CD4-positive, alpha-beta memory T cell (primary cell): ENCODE measurements at regions of chr3 and their contacts with region 1.

Region 1: GRCh38 chr3:136861890-136862616 is at the start of gene NCK1:
- DNase-seq: peak; percentile 97 to 100 (median 98)
- H3K4me3 ChIP-seq: peak within 1 kb of the TSS; percentile 74 to 89
- H3K4me3 Mint-ChIP-seq: peak within 1 kb of the TSS; percentile 80 to 99 (median 96)
- H3K27ac ChIP-seq: peak within 1 kb of the TSS; percentile 91
- H3K27ac Mint-ChIP-seq: peak within 1 kb of the TSS; percentile 98 to 99 (median 98)
- H3K4me1 ChIP-seq: peaks cover 47% of the 10 kb centered on the region
- H3K4me1 Mint-ChIP-seq: peaks cover 38 to 74% (median 54%) of the 10 kb centered on the region in 4 donors
- H3K27me3 ChIP-seq: no peaks in the 10 kb centered on the region
- H3K27me3 Mint-ChIP-seq: no peaks in the 10 kb centered on the region
- total RNA-seq, gene NCK1: 61.2 to 68.4 TPM

Region 2: GRCh38 chr3:135532032-135532431 is 1330.0 kb before region 1 on chr3:
- CTCF ChIA-PET with region 1: no interaction called
- POLR2A ChIA-PET with region 1: no interaction called
- intact Hi-C with region 1: no loop called
- DNase-seq: no peak
- H3K4me3 ChIP-seq: no peak overlapping the region
- H3K4me3 Mint-ChIP-seq: no peak overlapping the region
- H3K27ac ChIP-seq: no peak overlapping the region
- H3K27ac Mint-ChIP-seq: no peak overlapping the region
- H3K4me1 ChIP-seq: no peaks in the 10 kb centered on the region
- H3K4me1 Mint-ChIP-seq: no peaks in the 10 kb centered on the region
- H3K27me3 ChIP-seq: no peaks in the 10 kb centered on the region
- H3K27me3 Mint-ChIP-seq: no peaks in the 10 kb centered on the region

Region 3: DNA sequence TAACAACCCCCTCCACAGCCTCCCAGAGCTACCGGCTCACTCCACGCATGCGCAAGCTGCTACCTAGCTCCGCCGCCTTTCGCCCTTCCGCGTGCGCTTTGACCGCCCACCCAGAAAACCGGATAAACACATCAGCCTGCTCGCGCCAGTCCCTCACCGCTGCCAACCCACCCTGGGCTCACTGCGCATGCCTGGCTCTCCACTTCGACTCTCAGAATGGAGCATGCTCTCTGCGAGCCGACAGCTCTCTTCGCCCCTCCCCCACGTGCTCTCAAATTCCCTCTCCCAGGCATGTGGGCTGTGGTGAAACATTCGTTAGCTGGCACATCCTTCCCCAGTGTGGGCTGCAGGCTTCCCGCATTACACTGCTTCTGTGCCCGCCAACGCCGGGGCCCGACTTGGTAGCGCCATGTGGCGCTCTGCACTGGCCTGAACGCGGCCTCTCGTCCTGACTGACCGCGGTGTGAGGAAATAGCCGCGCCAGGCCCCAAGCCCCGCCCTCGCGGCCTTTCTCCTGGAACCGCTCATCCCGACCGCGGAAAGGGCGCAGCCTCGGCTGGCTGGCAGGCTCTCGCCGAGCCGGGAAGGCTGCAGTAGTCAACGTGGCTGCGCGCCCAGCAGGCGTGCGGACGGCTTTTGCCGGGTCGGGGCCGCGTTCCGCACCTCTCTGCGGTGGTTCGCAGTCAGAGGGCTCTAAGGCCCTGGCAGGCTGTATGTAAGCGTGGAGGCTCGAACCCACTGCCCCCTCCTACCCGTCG is 665.5 kb before region 1 on chr3:
- CTCF ChIA-PET with region 1: interaction called, 5 read pairs
- POLR2A ChIA-PET with region 1: interaction called, 21 read pairs
- intact Hi-C with region 1: loop called (anchors 1 kb)
- DNase-seq: peak; percentile 97 to 98 (median 97)
- H3K4me3 ChIP-seq: peak overlapping the region; percentile 66 to 71
- H3K4me3 Mint-ChIP-seq: peak overlapping the region; percentile 94 to 100 (median 99)
- H3K27ac ChIP-seq: peak overlapping the region; percentile 97
- H3K27ac Mint-ChIP-seq: peak overlapping the region; percentile 98 to 100 (median 100)
- H3K4me1 ChIP-seq: peaks cover 26% of the 10 kb centered on the region
- H3K4me1 Mint-ChIP-seq: peaks cover 24 to 52% (median 34%) of the 10 kb centered on the region in 4 donors
- H3K27me3 ChIP-seq: no peaks in the 10 kb centered on the region
- H3K27me3 Mint-ChIP-seq: peaks cover 3 to 9% of the 10 kb centered on the region in 2 donors

Region 4: GRCh38 chr3:136396916-136397315 is 465.1 kb before region 1 on chr3:
- CTCF ChIA-PET with region 1: interaction called, 14 read pairs
- POLR2A ChIA-PET with region 1: interaction called, 8 read pairs
- intact Hi-C with region 1: no loop called
- DNase-seq: no peak
- H3K4me3 ChIP-seq: no peak overlapping the region
- H3K4me3 Mint-ChIP-seq: no peak overlapping the region
- H3K27ac ChIP-seq: no peak overlapping the region
- H3K27ac Mint-ChIP-seq: peak overlapping the region in 1 of 7 donors; percentile 35
- H3K4me1 ChIP-seq: no peaks in the 10 kb centered on the region
- H3K4me1 Mint-ChIP-seq: peaks cover 0 to 2% (median 0%) of the 10 kb centered on the region in 4 donors
- H3K27me3 ChIP-seq: no peaks in the 10 kb centered on the region
- H3K27me3 Mint-ChIP-seq: no peaks in the 10 kb centered on the region

Region 5: GRCh38 chr3:136882572-136882971 is 20.5 kb after region 1 on chr3:
- CTCF ChIA-PET with region 1: interaction called, 18 read pairs
- POLR2A ChIA-PET with region 1: interaction called, 35 read pairs
- intact Hi-C with region 1: loop called (anchors 1 kb)
- DNase-seq: peak in 2 of 5 donors; percentile 28
- H3K4me3 ChIP-seq: no peak overlapping the region
- H3K4me3 Mint-ChIP-seq: peak overlapping the region in 3 of 8 donors; percentile 11 to 61 (median 37)
- H3K27ac ChIP-seq: no peak overlapping the region
- H3K27ac Mint-ChIP-seq: peak overlapping the region; percentile 5 to 91 (median 72)
- H3K4me1 ChIP-seq: peaks cover 73% of the 10 kb centered on the region
- H3K4me1 Mint-ChIP-seq: peaks cover 58 to 89% (median 72%) of the 10 kb centered on the region in 4 donors
- H3K27me3 ChIP-seq: no peaks in the 10 kb centered on the region
- H3K27me3 Mint-ChIP-seq: no peaks in the 10 kb centered on the region

Region 6: DNA sequence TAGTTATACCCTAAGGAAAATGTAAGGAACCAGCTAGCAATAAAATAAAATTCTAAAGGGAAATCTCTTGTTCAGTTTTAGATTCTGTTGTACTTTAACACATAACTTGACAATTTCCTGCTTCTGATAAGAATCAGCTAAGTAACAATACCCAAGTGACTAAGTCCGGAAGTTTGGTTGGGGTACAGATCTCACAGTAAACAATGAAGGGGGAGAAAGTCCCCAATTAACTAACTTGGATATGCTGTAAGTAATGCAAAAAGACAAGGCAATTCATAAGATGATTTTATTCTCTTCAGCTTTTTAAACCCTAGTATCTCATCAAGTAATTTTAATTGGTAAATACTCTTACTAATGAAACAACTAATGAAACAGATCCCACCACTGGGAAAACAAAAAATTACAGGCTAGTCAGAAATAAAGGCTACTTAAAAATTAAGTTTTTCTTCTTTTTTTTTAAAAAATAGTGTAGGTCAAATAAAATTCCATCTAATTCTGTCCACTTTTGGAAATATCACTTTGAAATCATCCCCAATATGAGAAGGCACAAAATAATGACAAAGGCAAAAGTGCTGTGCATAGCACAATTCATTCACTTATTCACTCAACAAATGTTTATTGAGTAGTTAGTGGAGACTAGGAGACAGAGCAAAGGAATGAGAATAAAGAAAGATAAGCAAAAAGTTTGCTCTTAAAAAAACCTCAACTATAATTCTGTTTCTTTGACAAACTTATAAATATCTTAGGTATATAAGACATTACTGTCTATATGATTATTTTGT is 57.9 kb after region 1 on chr3:
- CTCF ChIA-PET with region 1: interaction called, 7 read pairs
- POLR2A ChIA-PET with region 1: interaction called, 49 read pairs
- intact Hi-C with region 1: loop called (anchors 1 kb)
- DNase-seq: peak; percentile 64 to 78 (median 69)
- H3K4me3 ChIP-seq: no peak overlapping the region
- H3K4me3 Mint-ChIP-seq: peak overlapping the region; percentile 25 to 91 (median 74)
- H3K27ac ChIP-seq: peak overlapping the region; percentile 55
- H3K27ac Mint-ChIP-seq: peak overlapping the region; percentile 81 to 95 (median 86)
- H3K4me1 ChIP-seq: peaks cover 93% of the 10 kb centered on the region
- H3K4me1 Mint-ChIP-seq: peaks cover 64 to 90% (median 77%) of the 10 kb centered on the region in 4 donors
- H3K27me3 ChIP-seq: no peaks in the 10 kb centered on the region
- H3K27me3 Mint-ChIP-seq: no peaks in the 10 kb centered on the region

Region 7: GRCh38 chr3:137121704-137122314 is 259.8 kb after region 1 on chr3:
- CTCF ChIA-PET with region 1: no interaction called
- POLR2A ChIA-PET with region 1: no interaction called
- intact Hi-C with region 1: no loop called
- DNase-seq: no peak
- H3K4me3 ChIP-seq: no peak overlapping the region
- H3K4me3 Mint-ChIP-seq: no peak overlapping the region
- H3K27ac ChIP-seq: no peak overlapping the region
- H3K27ac Mint-ChIP-seq: no peak overlapping the region
- H3K4me1 ChIP-seq: no peaks in the 10 kb centered on the region
- H3K4me1 Mint-ChIP-seq: no peaks in the 10 kb centered on the region
- H3K27me3 ChIP-seq: no peaks in the 10 kb centered on the region
- H3K27me3 Mint-ChIP-seq: peaks cover 5 to 13% of the 10 kb centered on the region in 2 donors